ENCODE measurements at regions of chr16 and their contacts with region 1.

Region 1: GRCh38 chr16:75206749-75207451 is at the start of gene CTRB2:
- DNase-seq: peak in 1 of 3 donors; percentile 29
- ATAC-seq: peak; percentile 5
- H3K4me3 ChIP-seq: no peak within 1 kb of the TSS
- H3K4me1 ChIP-seq: no peaks in the 10 kb centered on the region
- CTCF ChIP-seq: no peak
- total RNA-seq, gene CTRB2: not detected

Region 2: GRCh38 chr16:74874912-74875546 is 331.9 kb before region 1 on chr16:
- intact Hi-C with region 1: no loop called
- DNase-seq: no peak
- ATAC-seq: no peak
- H3K4me3 ChIP-seq: no peak overlapping the region
- H3K4me1 ChIP-seq: no peaks in the 10 kb centered on the region
- CTCF ChIP-seq: no peak

Region 3: GRCh38 chr16:75224306-75225091 is 17.6 kb after region 1 on chr16:
- intact Hi-C with region 1: loop called (anchors 2 kb)
- DNase-seq: no peak
- ATAC-seq: peak; percentile 16
- H3K4me3 ChIP-seq: no peak overlapping the region
- H3K4me1 ChIP-seq: no peaks in the 10 kb centered on the region
- CTCF ChIP-seq: no peak

Measured in mucosa of descending colon (tissue), 3 donors.